Sciatic nerve (tissue), 2 donors: ENCODE measurements at regions of chr3 and their contacts with region 1.

Region 1: DNA sequence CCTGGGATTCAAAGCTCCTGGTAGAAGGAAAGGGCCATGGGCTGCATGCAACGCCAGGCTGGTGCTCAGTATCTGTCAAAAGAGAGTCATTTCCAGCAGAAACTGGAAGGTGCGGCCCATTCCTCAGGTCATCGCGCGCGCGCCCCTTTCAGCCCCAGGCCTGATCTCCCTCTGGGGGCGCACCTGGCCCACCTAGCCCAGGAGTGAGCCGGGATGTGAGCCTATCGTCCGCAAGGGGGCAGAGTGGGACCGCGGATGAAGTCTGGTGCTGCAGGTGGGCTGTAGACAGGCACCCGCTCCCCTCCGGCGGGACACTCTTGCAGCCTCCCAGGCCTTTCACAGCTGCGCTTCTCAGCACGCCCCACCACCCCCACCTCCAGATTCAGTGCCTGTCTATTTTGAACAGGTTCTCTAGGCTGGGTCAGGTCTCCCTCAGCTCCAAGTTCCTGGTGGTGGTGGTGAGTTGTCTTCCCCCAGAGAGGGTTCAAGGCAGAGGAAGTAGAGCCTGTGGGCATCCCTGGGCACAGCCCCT is 5.8 kb upstream of the RPL29 start:
- DNase-seq: peak; percentile 85
- ATAC-seq: peak; percentile 80

Region 2: DNA sequence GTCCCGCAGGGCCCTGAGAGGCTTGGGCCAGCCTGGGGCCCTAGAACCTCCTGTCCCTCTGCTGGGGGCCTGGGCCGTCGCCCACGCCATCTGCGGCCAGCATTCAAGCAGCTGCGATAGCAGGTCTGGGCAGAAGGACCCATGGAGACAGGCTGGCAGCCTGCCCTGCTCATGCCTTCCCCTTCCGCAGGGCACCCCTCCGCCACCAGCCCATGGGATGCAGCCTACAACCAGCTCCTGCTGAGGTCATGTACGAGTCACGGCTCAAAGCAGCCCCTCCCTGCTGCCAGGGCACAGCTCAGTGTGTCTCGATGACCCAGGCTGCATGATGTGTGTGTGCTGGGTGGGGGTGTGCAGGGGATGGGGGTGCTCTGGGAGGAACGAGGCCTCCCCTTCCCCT is 27.1 kb after region 1 on chr3:
- intact Hi-C with region 1: no loop called
- DNase-seq: no peak
- ATAC-seq: peak; percentile 49

Region 3: GRCh38 chr3:52052831-52053306 is 51.4 kb after region 1 on chr3:
- intact Hi-C with region 1: loop called (anchors 5 kb)
- DNase-seq: peak; percentile 91
- ATAC-seq: peak; percentile 60

Region 4: DNA sequence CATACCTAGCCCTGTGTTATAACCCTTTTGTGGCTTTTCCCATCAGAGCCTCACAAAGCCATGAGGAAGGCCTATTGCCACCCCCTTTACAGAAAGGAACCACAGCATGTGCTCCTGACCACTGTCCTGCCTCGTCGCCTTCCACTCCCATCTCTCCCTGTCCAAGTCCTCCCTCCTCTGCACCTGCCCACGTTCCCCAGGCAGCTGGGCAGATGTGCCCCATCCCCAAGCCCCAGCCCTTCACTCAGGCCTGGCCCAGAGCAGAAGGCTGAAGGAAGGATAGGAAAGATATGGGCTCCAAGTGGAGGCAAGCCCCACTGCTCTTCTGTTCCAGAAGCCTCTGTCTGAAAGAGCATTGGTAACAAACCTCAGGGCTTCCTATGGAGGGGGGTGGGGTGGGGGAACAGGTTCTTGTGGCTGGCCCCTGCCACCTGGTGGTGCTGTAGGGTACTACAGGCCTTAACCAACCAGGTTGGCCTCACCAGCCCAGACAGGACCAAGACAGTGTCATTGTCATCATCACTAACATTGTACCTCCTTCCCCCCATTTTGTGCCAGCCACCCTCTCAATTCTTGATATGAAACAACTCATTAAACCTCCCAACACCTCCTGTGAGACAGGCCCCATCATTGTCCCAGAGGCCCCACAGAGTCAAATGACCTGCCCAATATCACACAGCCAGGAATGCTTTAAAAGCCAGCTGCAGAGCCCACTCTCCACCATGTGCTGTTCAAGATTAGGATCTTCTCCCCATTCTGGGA is 142.7 kb after region 1 on chr3:
- intact Hi-C with region 1: loop called (anchors 2 kb)
- DNase-seq: peak; percentile 91
- ATAC-seq: peak; percentile 89

Region 5: DNA sequence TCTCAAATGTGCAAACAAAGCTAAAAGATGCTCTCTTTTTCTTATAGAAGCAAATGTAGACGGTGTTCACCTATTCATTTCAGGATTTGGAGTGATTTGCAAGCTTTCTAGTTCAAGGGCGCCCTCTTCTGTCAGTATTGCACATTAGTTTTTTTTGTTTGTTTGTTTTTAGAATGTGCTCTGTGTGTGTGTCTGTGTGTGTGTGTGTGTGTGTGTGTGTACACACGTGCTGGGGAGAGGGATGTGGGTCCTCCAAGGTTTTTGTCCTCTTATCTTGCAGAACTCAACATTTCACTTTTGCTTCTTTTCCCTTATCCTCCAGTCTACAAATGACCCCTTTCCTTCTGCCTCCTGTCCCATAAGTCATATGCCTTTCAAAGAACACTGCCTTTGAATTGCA is 338.1 kb after region 1 on chr3:
- intact Hi-C with region 1: loop called (anchors 5 kb)
- DNase-seq: no peak
- ATAC-seq: peak; percentile 67